CD4-positive, alpha-beta T cell (primary cell): ENCODE measurements at regions of chrX and their contacts with region 1.

Region 1: GRCh38 chrX:97672138-97672537 is 788.4 kb downstream of the RPA4 start:
- DNase-seq: no peak
- ATAC-seq: no peak
- H3K4me3 ChIP-seq: no peak overlapping the region
- H3K4me3 Mint-ChIP-seq: no peak overlapping the region
- H3K27ac ChIP-seq: no peak overlapping the region
- H3K27ac Mint-ChIP-seq: no peak overlapping the region
- H3K4me1 ChIP-seq: no peaks in the 10 kb centered on the region
- H3K4me1 Mint-ChIP-seq: no peaks in the 10 kb centered on the region
- H3K27me3 ChIP-seq: no peaks in the 10 kb centered on the region
- H3K27me3 Mint-ChIP-seq: no peaks in the 10 kb centered on the region
- CTCF ChIP-seq: no peak

Region 2: GRCh38 chrX:97639526-97639925 is 32.6 kb before region 1 on chrX:
- CTCF ChIA-PET with region 1: no interaction called
- POLR2A ChIA-PET with region 1: no interaction called
- intact Hi-C with region 1: no loop called
- DNase-seq: peak in 1 of 14 experiments; percentile 0
- ATAC-seq: no peak
- H3K4me3 ChIP-seq: no peak overlapping the region
- H3K4me3 Mint-ChIP-seq: no peak overlapping the region
- H3K27ac ChIP-seq: no peak overlapping the region
- H3K27ac Mint-ChIP-seq: no peak overlapping the region
- H3K4me1 ChIP-seq: no peaks in the 10 kb centered on the region
- H3K4me1 Mint-ChIP-seq: peaks cover 8% of the 10 kb centered on the region
- H3K27me3 ChIP-seq: no peaks in the 10 kb centered on the region
- H3K27me3 Mint-ChIP-seq: no peaks in the 10 kb centered on the region
- CTCF ChIP-seq: no peak

Region 3: DNA sequence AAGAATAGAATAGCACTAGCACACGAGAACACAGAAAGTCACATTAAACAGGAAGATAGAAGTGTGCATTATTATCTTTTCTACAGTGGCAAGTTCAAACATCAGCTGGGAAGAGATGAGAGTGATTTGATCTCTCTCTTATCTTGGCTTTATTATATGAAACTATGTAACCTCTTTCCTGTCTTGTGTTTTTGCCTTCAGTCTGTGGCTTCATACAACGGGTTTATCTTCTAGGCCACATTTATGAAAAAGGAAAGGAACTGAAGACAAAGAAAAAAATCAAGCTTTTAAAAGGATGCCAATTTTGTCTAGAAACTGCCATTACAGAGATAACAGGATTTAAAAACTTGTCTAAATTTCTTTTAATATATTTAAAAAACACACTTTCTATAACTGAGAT is 195.1 kb after region 1 on chrX:
- CTCF ChIA-PET with region 1: no interaction called
- POLR2A ChIA-PET with region 1: no interaction called
- intact Hi-C with region 1: loop called in 1 of 2 experiments (anchors 5 kb)
- DNase-seq: no peak
- ATAC-seq: no peak
- H3K4me3 ChIP-seq: no peak overlapping the region
- H3K4me3 Mint-ChIP-seq: no peak overlapping the region
- H3K27ac ChIP-seq: no peak overlapping the region
- H3K27ac Mint-ChIP-seq: no peak overlapping the region
- H3K4me1 ChIP-seq: no peaks in the 10 kb centered on the region
- H3K4me1 Mint-ChIP-seq: no peaks in the 10 kb centered on the region
- H3K27me3 ChIP-seq: no peaks in the 10 kb centered on the region
- H3K27me3 Mint-ChIP-seq: no peaks in the 10 kb centered on the region
- CTCF ChIP-seq: no peak